ENCODE measurements at regions of chr17 and their contacts with region 1.

Region 1: DNA sequence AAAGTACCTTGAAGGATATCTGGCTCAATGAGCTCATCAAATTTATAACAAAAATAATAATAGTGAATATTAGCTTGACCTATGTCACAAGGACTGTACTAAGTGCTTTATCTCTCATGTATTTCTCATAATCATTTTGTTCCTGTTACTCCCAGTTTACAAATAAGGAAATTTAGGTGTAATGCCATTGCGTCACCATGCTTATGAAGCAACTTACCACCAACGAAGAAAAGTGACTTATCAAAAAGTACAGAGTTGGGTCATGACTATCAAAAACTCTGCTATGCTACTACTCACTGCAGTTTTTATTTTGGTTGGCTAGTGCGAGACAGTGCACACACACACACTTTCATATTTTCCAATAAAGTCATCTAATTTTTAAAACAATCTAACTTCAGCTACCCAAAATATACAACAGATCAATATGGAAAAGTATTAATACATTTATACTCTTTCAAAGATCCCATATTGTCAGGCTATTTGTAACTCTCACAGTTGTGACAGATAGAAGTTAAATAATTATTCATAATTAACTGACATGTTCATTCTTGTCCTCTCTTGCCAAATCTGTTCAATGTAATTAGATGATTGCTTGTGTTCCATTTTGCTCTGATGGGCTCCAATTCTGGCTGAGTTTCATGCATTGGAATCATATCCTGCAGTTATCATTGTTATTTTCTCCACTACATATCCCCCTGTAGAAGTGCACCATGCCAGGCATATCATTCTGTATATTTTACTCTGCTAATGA is 119.4 kb downstream of the KCNJ2 start:
- DNase-seq: no peak

Region 2: DNA sequence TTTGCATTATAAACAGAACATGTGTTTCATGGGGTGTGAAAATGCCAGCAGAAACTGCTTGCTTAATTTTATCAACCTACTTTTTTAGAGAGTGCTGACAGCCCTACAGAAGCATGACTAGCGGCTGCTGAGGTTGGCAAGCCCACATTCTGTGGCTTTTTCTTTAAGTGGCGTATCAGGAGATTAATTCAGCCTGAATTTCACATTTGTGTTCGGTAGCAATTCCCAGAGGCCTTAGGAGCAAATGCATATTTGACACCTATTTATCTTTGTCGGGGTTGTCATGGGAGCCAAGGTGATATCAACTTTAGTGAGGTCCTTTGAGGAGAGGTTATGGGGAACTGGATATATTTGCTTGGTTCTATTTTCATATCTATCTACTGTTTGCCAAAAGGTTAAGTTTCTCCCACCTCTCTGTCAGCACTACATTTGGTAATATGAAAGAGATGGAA is 21.5 kb after region 1 on chr17:
- intact Hi-C with region 1: loop called in 1 of 2 experiments (anchors 1 kb)
- DNase-seq: no peak

Measured in posterior vena cava (tissue), 2 donors.